Activated CD8-positive, alpha-beta T cell treated with anti-CD3 and anti-CD28 coated beads for 36 hours (primary cell): ENCODE measurements at regions of chr1 and their contacts with region 1.

Region 1: GRCh38 chr1:178300352-178300699 is 196.4 kb downstream of the CLEC20A start:
- DNase-seq: no peak
- ATAC-seq: no peak
- H3K4me3 Mint-ChIP-seq: no peak overlapping the region
- H3K27ac Mint-ChIP-seq: no peak overlapping the region
- H3K4me1 Mint-ChIP-seq: no peaks in the 10 kb centered on the region
- H3K27me3 Mint-ChIP-seq: peaks cover 2% of the 10 kb centered on the region
- CTCF ChIP-seq: no peak

Region 2: GRCh38 chr1:178075333-178075732 is 225.0 kb before region 1 on chr1:
- CTCF ChIA-PET with region 1: no interaction called
- POLR2A ChIA-PET with region 1: no interaction called
- intact Hi-C with region 1: no loop called
- DNase-seq: no peak
- ATAC-seq: no peak
- H3K4me3 Mint-ChIP-seq: no peak overlapping the region
- H3K27ac Mint-ChIP-seq: no peak overlapping the region
- H3K4me1 Mint-ChIP-seq: no peaks in the 10 kb centered on the region
- H3K27me3 Mint-ChIP-seq: no peaks in the 10 kb centered on the region
- CTCF ChIP-seq: no peak

Region 3: DNA sequence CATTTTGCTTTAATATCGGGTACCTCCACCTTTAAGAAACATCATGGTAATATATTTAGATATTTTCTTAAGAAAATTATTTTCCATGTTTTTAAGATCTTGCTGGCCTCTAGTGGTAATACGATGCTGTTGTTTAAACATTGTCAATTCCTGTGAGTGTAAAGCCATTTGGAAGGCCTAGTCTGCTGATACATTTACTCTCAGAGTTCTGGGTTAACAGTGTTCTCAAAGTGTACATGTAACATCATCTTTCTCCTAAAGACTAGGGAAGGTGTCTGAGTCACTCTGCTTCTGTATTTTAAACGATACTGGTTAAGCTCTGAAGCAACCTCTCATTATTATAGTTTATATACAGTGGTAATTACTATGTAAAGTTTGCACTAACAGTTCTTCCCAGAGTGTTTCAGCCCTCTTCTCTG is 17.4 kb before region 1 on chr1:
- CTCF ChIA-PET with region 1: interaction called, 13 read pairs
- POLR2A ChIA-PET with region 1: interaction called, 3 read pairs
- intact Hi-C with region 1: no loop called
- DNase-seq: no peak
- ATAC-seq: no peak
- H3K4me3 Mint-ChIP-seq: no peak overlapping the region
- H3K27ac Mint-ChIP-seq: no peak overlapping the region
- H3K4me1 Mint-ChIP-seq: no peaks in the 10 kb centered on the region
- H3K27me3 Mint-ChIP-seq: peaks cover 2% of the 10 kb centered on the region
- CTCF ChIP-seq: no peak

Region 4: DNA sequence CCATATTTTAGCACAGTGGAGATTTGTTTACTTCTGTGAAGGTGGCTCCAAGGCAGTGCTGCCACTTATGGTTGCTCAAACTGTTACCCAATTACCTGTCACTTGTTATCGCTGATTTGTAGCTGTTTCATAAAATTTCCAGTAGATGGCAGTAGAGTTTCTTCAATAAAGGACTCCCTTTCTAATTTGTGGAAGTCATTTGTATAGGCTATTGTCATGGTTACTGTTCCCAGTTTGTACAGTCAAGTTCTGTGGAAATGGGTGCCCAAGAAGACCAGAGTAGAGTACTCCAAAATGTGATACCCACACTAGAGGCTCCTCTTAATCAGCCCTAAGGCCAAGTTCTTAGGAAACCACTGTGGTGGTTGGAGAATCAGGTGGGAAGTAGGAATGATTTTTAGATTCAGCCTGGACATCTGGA is 10.4 kb after region 1 on chr1:
- CTCF ChIA-PET with region 1: interaction called, 50 read pairs
- POLR2A ChIA-PET with region 1: no interaction called
- intact Hi-C with region 1: no loop called
- DNase-seq: no peak
- ATAC-seq: peak; percentile 51
- H3K4me3 Mint-ChIP-seq: no peak overlapping the region
- H3K27ac Mint-ChIP-seq: no peak overlapping the region
- H3K4me1 Mint-ChIP-seq: no peaks in the 10 kb centered on the region
- H3K27me3 Mint-ChIP-seq: peaks cover 5% of the 10 kb centered on the region
- CTCF ChIP-seq: peak; percentile 67

Region 5: GRCh38 chr1:178361841-178362240 is 61.5 kb after region 1 on chr1:
- CTCF ChIA-PET with region 1: no interaction called
- POLR2A ChIA-PET with region 1: no interaction called
- intact Hi-C with region 1: no loop called
- DNase-seq: no peak
- ATAC-seq: no peak
- H3K4me3 Mint-ChIP-seq: no peak overlapping the region
- H3K27ac Mint-ChIP-seq: no peak overlapping the region
- H3K4me1 Mint-ChIP-seq: no peaks in the 10 kb centered on the region
- H3K27me3 Mint-ChIP-seq: peaks cover 2% of the 10 kb centered on the region
- CTCF ChIP-seq: no peak

Region 6: DNA sequence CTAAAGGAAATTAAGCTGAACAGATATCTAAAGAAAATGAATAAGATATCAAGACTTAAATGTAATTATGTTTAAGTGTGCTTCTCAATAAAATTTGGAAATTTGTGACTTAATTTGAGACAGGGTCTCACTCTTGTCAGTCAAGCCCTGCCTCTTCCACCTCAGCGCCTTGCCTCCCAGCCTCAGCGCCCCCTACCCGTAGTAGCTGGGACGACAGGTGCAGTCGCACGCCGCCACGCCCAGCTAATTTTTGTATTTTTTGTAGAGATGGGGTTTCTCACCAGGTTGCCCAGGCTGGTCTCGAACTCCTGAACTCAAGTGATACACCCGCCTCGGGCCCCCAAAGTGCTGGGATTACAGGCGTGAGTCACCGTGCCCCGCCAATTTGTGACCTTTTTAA is 79.5 kb after region 1 on chr1:
- CTCF ChIA-PET with region 1: no interaction called
- POLR2A ChIA-PET with region 1: no interaction called
- intact Hi-C with region 1: no loop called
- DNase-seq: peak; percentile 8
- ATAC-seq: no peak
- H3K4me3 Mint-ChIP-seq: no peak overlapping the region
- H3K27ac Mint-ChIP-seq: no peak overlapping the region
- H3K4me1 Mint-ChIP-seq: no peaks in the 10 kb centered on the region
- H3K27me3 Mint-ChIP-seq: peaks cover 2% of the 10 kb centered on the region
- CTCF ChIP-seq: peak; percentile 34

Region 7: GRCh38 chr1:178494569-178494971 is 194.2 kb after region 1 on chr1:
- CTCF ChIA-PET with region 1: no interaction called
- POLR2A ChIA-PET with region 1: no interaction called
- intact Hi-C with region 1: no loop called
- DNase-seq: no peak
- ATAC-seq: no peak
- H3K4me3 Mint-ChIP-seq: no peak overlapping the region
- H3K27ac Mint-ChIP-seq: no peak overlapping the region
- H3K4me1 Mint-ChIP-seq: no peaks in the 10 kb centered on the region
- H3K27me3 Mint-ChIP-seq: no peaks in the 10 kb centered on the region
- CTCF ChIP-seq: no peak